GM12878 (cell line): ENCODE measurements at regions of chr4 and their contacts with region 1.

Region 1: GRCh38 chr4:51842554-51843308 is at the start of gene DCUN1D4:
- DNase-seq: peak; percentile 96
- ATAC-seq: peak; percentile 90
- H3K4me3 ChIP-seq: peak within 1 kb of the TSS; percentile 93
- H3K27ac ChIP-seq: peak within 1 kb of the TSS; percentile 55
- H3K4me1 ChIP-seq: peaks cover 5% of the 10 kb centered on the region
- H3K27me3 ChIP-seq: no peaks in the 10 kb centered on the region
- CTCF ChIP-seq: peak; percentile 24 to 35 (median 25); a peak in 4 of 6 replicates
- EP300 ChIP-seq: no peak
- POLR2A ChIP-seq: peak; percentile 83
- RAD21 ChIP-seq: no peak
- polyA plus RNA-seq, gene DCUN1D4: 7.1 to 12.0 TPM

Region 2: GRCh38 chr4:51831133-51831532 is 11.6 kb before region 1 on chr4:
- CTCF ChIA-PET with region 1: interaction called, 12 read pairs
- POLR2A ChIA-PET with region 1: interaction called, 3 read pairs
- RAD21 ChIA-PET with region 1: interaction called, 4 read pairs
- SMC1A ChIA-PET with region 1: interaction called, 4 read pairs
- in situ Hi-C with region 1: no loop called
- intact Hi-C with region 1: no loop called
- DNase-seq: no peak
- ATAC-seq: peak; percentile 92
- H3K4me3 ChIP-seq: no peak overlapping the region
- H3K27ac ChIP-seq: no peak overlapping the region
- H3K4me1 ChIP-seq: no peaks in the 10 kb centered on the region
- H3K27me3 ChIP-seq: no peaks in the 10 kb centered on the region
- CTCF ChIP-seq: peak; percentile 66 to 79 (median 68); a peak in 5 of 6 replicates
- EP300 ChIP-seq: no peak
- POLR2A ChIP-seq: no peak
- RAD21 ChIP-seq: peak; percentile 92

Region 3: GRCh38 chr4:51906167-51906958 is 63.6 kb after region 1 on chr4:
- CTCF ChIA-PET with region 1: no interaction called
- POLR2A ChIA-PET with region 1: no interaction called
- RAD21 ChIA-PET with region 1: interaction called, 7 read pairs
- SMC1A ChIA-PET with region 1: interaction called, 4 read pairs
- in situ Hi-C with region 1: no loop called
- intact Hi-C with region 1: loop called (anchors 5 kb)
- DNase-seq: peak; percentile 69
- ATAC-seq: peak; percentile 98
- H3K4me3 ChIP-seq: no peak overlapping the region
- H3K27ac ChIP-seq: no peak overlapping the region
- H3K4me1 ChIP-seq: peaks cover 16% of the 10 kb centered on the region
- H3K27me3 ChIP-seq: no peaks in the 10 kb centered on the region
- CTCF ChIP-seq: no peak
- EP300 ChIP-seq: peak; percentile 52 to 87
- POLR2A ChIP-seq: no peak
- RAD21 ChIP-seq: no peak

Region 4: GRCh38 chr4:52028969-52029368 is 186.2 kb after region 1 on chr4:
- CTCF ChIA-PET with region 1: interaction called, 3 read pairs
- POLR2A ChIA-PET with region 1: no interaction called
- RAD21 ChIA-PET with region 1: interaction called, 5 read pairs
- SMC1A ChIA-PET with region 1: no interaction called
- in situ Hi-C with region 1: no loop called
- intact Hi-C with region 1: loop called (anchors 2 kb)
- DNase-seq: no peak
- ATAC-seq: no peak
- H3K4me3 ChIP-seq: no peak overlapping the region
- H3K27ac ChIP-seq: no peak overlapping the region
- H3K4me1 ChIP-seq: no peaks in the 10 kb centered on the region
- H3K27me3 ChIP-seq: no peaks in the 10 kb centered on the region
- CTCF ChIP-seq: no peak
- EP300 ChIP-seq: no peak
- POLR2A ChIP-seq: no peak
- RAD21 ChIP-seq: no peak

Region 5: GRCh38 chr4:52721968-52722815 is 879.5 kb after region 1 on chr4:
- CTCF ChIA-PET with region 1: no interaction called
- POLR2A ChIA-PET with region 1: no interaction called
- RAD21 ChIA-PET with region 1: no interaction called
- SMC1A ChIA-PET with region 1: no interaction called
- in situ Hi-C with region 1: no loop called
- intact Hi-C with region 1: loop called (anchors 5 kb)
- DNase-seq: peak; percentile 92
- ATAC-seq: peak; percentile 98
- H3K4me3 ChIP-seq: peak overlapping the region; percentile 76
- H3K27ac ChIP-seq: peak overlapping the region; percentile 83
- H3K4me1 ChIP-seq: no peaks in the 10 kb centered on the region
- H3K27me3 ChIP-seq: no peaks in the 10 kb centered on the region
- CTCF ChIP-seq: no peak
- EP300 ChIP-seq: 0 out of 4 replicates have a peak, but pooled peaks of 1 of the 2 experiments have one; percentile 30
- POLR2A ChIP-seq: peak; percentile 95
- RAD21 ChIP-seq: no peak